A673 (cell line): ENCODE measurements at regions of chrX and their contacts with region 1.

Region 1: DNA sequence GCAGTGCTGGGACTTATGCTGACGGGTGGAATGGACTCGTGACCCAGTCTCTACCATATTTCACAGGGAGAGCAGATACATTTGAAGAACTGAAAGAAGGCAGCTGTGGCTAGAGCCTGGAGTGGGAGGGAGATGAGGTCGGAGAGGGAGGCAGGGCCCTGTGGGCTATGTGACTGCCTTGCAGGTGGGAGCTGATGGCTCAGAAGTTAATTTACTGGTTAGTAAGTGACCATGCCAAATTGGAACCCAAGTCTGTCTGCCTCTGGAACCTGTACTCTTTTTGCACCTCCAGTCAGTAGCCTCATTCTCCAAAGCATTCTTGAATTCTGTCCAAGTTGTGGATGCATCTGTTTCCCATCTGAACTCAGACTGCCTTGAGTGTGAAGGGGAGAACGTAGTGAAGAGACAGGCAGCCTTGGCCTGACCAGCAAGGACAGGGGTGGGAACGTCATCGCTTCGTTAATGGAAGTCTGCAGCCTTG is 92.3 kb downstream of the REPS2 start:
- DNase-seq: no peak
- H3K4me3 ChIP-seq: no peak overlapping the region
- H3K27ac ChIP-seq: no peak overlapping the region
- H3K4me1 ChIP-seq: no peaks in the 10 kb centered on the region
- H3K27me3 ChIP-seq: peaks cover 3% of the 10 kb centered on the region
- CTCF ChIP-seq: no peak

Region 2: GRCh38 chrX:15418041-15418706 is 1620.5 kb before region 1 on chrX:
- CTCF ChIA-PET with region 1: no interaction called
- POLR2A ChIA-PET with region 1: interaction called, 13 read pairs
- intact Hi-C with region 1: no loop called
- DNase-seq: no peak
- H3K4me3 ChIP-seq: no peak overlapping the region
- H3K27ac ChIP-seq: no peak overlapping the region
- H3K4me1 ChIP-seq: no peaks in the 10 kb centered on the region
- H3K27me3 ChIP-seq: no peaks in the 10 kb centered on the region
- CTCF ChIP-seq: no peak

Region 3: DNA sequence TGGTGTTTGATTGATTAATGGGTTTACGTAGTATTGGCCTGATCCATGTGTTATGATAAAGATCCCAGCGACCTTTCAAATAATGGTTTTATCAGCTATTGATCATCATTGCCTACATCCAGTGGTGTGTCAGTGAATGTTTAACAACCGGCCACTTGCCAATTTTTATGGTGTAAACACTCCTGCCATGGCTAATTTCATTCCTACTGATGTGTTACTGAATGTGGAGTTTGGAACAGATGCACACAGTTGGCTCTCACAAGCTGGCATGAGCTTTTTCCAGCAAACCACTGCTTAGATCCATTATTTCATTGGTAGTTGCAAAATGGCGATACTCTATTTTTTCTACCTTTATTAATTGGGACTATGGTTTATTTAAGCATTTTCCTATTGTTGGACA is 47.6 kb after region 1 on chrX:
- CTCF ChIA-PET with region 1: no interaction called
- POLR2A ChIA-PET with region 1: no interaction called
- intact Hi-C with region 1: no loop called
- DNase-seq: no peak
- H3K4me3 ChIP-seq: no peak overlapping the region
- H3K27ac ChIP-seq: no peak overlapping the region
- H3K4me1 ChIP-seq: no peaks in the 10 kb centered on the region
- H3K27me3 ChIP-seq: peaks cover 55% of the 10 kb centered on the region
- CTCF ChIP-seq: no peak